IMR-90 (cell line): ENCODE measurements at regions of chr5 and their contacts with region 1.

Region 1: DNA sequence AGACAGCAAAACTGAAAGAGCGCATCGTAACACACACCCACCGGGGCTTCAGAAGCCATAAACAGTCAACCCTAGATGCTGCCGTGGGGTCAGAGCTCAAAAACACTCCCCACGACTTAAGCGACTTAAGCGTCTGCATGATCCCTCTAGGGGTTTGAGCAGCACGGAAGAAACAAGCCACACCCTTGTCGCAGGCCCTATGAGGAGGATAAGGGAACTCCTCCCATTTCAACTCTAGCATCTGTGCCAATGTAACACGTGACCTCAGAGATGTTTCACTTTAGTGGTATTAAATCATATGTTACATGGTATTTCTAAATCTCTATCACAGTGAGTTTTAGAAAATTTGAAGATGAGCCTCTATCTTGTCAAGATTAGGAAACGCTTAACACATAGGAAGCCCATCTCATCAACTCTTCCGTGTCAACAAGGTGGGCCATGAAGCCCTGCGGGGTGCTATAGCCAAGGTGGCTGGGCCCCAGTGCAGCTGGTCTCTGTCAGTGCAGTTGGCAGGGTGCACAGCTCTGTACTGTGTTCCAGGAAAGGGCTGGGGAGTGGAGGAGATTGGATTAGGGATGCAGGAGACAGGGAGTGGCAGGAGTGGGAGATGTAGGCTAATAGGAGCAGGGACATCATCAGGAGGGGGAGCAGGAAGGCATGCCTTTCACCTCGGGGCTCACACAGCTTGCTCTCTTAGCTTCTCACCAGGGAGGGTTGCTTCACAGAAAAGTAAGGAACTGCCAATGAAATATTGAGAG is 33.1 kb downstream of the ZCCHC9 start:
- DNase-seq: no peak
- ATAC-seq: no peak
- H3K4me3 ChIP-seq: no peak overlapping the region
- H3K27ac ChIP-seq: no peak overlapping the region
- H3K4me1 ChIP-seq: no peaks in the 10 kb centered on the region
- H3K27me3 ChIP-seq: no peaks in the 10 kb centered on the region; the same call in 1 of the 2 replicates
- CTCF ChIP-seq: no peak
- POLR2A ChIP-seq: no peak
- RAD21 ChIP-seq: no peak

Region 2: DNA sequence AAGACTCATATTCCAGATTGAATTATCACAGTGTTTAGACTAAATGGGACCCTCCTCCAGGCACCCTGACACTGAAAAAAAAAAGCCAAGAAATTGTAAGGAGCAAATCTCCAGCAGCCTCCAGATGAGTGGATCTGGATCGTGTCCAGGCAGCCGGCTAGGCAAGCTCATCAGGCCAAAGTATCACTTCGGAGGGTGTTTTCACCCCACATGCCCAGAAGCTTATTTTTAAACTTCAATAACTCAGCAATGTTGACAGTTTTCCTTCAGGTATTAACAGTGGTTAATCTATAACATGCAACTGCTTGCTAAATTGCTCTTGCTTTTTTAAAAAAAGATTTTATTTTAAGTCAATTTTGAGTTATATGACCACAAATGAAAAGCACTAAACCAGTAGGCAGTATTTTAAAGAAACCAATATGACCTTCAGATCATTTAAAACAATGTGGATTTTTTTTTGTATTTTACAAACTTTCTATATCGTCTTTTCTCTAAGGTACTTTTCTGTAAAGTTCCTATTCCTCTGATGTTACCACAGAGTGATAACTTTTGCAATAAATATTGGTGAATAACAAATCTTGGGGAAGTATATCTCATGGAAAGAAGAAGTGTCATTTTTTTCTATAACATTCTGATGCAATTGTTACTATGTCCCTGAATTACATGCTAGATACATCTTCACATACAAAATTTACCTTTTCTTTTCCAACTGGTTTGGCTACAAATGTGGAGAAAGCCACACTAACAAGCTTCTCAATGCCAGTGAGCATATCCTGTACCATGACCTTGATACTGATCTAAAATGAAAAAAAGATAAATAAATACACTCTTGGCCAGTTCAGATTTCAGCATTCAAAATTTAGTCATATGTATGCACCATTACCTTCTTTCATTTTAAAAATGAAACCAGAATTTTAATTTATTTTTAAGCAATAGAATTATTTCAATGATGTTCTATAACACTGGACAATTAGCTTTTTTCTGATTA is 28.9 kb after region 1 on chr5:
- CTCF ChIA-PET with region 1: no interaction called
- POLR2A ChIA-PET with region 1: no interaction called
- dilution Hi-C with region 1: no loop called
- in situ Hi-C with region 1: no loop called
- intact Hi-C with region 1: loop called (anchors 2 kb)
- DNase-seq: no peak
- ATAC-seq: no peak
- H3K4me3 ChIP-seq: no peak overlapping the region
- H3K27ac ChIP-seq: no peak overlapping the region
- H3K4me1 ChIP-seq: no peaks in the 10 kb centered on the region
- H3K27me3 ChIP-seq: no peaks in the 10 kb centered on the region
- CTCF ChIP-seq: no peak
- POLR2A ChIP-seq: no peak
- RAD21 ChIP-seq: no peak

Region 3: GRCh38 chr5:81609810-81610375 is 275.4 kb after region 1 on chr5:
- CTCF ChIA-PET with region 1: no interaction called
- POLR2A ChIA-PET with region 1: no interaction called
- dilution Hi-C with region 1: no loop called
- in situ Hi-C with region 1: no loop called
- intact Hi-C with region 1: no loop called
- DNase-seq: no peak
- ATAC-seq: no peak
- H3K4me3 ChIP-seq: no peak overlapping the region
- H3K27ac ChIP-seq: no peak overlapping the region
- H3K4me1 ChIP-seq: no peaks in the 10 kb centered on the region
- H3K27me3 ChIP-seq: no peaks in the 10 kb centered on the region
- CTCF ChIP-seq: no peak
- POLR2A ChIP-seq: no peak
- RAD21 ChIP-seq: no peak